ENCODE measurements at regions of chr12 and their contacts with region 1.

Region 1: DNA sequence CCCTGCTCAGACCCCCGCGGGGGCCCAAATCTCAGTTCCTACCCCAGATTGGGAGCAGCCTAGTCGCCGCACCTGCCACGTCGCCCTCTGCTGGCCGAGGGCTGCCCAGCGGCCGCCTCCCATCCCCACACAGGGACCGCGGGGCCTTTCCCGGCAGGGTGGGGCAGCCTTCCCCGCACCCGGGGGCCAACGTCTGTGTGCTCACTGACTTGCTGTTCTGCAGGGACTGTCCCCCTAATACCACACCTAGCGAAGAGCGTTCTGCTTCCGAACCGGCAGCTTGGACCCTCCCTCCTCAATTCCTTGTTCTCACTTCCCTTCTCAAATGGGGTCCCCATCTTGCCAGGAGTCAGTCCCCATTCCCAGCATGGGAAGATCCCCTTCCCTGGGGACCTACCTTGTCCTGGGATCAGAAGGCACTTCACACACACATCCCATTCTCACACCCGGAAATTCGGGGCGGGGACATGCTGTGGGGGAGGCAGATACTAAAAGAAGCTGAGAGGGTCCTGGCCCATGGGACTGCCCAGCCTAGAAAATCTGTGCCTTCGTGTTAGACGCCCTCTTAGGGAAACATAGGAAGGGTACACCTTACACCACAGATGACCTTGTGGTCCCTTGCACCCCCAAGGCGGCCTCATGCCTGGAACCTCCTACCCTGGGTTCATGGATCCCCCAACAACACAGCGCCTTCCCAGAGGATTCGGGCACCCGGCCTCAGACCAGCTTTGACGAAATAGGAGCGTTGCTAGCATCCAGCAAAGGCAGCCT is 16.4 kb downstream of the ACVRL1 start:
- DNase-seq: peak; percentile 85
- ATAC-seq: peak; percentile 73
- H3K4me3 ChIP-seq: no peak overlapping the region
- H3K27ac ChIP-seq: peak overlapping the region; percentile 68
- H3K4me1 ChIP-seq: peaks cover 39% of the 10 kb centered on the region
- H3K27me3 ChIP-seq: no peaks in the 10 kb centered on the region
- CTCF ChIP-seq: peak; percentile 86

Region 2: DNA sequence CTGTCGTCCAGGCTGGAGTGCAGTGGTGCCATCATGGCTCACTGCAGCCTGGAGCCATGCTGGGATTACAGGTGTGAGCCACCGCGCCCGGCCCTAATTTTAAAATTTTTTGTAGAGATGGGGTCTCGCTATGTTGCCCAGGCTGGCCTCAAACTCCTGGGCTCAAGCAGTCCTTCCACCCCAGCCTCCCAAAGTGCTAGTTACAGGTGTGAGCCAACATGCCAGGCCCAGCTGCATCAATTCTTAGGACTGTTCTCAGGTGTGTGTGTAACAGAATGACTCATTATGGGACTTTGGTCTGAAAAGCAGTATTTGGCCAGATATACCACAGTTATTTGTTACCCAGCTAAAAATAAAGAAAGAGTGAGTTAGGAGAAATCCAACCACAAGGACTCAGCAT is 858.2 kb before region 1 on chr12:
- intact Hi-C with region 1: no loop called
- DNase-seq: no peak
- ATAC-seq: no peak
- H3K4me3 ChIP-seq: no peak overlapping the region
- H3K27ac ChIP-seq: no peak overlapping the region
- H3K4me1 ChIP-seq: no peaks in the 10 kb centered on the region
- H3K27me3 ChIP-seq: no peaks in the 10 kb centered on the region
- CTCF ChIP-seq: no peak

Region 3: DNA sequence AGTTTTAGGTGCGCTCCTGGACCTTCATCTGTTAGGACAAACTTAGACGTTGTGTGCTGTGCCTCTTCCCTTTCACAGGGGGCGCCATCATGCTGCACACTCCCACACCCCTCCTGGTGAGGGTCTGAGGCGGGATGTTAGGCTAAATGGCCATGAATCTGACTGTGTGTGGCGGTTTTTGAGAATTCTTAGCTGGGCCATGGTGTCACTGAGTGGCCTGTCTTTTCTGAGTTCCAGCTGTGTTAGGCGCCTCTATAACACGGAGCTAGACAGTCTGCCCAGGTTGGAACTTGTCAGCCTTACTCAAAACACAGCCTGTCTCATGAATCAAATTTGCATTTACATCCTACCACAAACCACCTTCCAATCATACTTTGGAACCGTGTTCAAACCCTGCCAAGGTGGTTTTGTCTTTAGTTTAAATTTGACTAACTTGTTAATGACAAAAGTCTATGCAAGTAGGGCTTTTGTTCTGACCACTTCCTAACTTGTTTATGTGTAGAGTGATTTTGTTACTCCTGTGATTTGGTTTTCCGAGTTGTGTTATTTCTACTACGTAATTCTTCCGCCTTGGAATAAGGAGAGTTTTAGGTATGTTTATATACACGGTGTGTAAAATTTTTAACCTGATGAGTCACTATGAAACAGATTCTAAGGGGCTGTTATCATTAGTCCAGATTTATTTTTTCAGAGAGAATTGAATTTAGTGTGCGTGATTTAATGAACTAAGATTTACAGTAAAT is 47.4 kb after region 1 on chr12:
- intact Hi-C with region 1: loop called (anchors 10 kb)
- DNase-seq: no peak
- ATAC-seq: peak; percentile 17
- H3K4me3 ChIP-seq: no peak overlapping the region
- H3K27ac ChIP-seq: peak overlapping the region; percentile 31
- H3K4me1 ChIP-seq: peaks cover 52% of the 10 kb centered on the region
- H3K27me3 ChIP-seq: no peaks in the 10 kb centered on the region
- CTCF ChIP-seq: peak; percentile 49

Region 4: DNA sequence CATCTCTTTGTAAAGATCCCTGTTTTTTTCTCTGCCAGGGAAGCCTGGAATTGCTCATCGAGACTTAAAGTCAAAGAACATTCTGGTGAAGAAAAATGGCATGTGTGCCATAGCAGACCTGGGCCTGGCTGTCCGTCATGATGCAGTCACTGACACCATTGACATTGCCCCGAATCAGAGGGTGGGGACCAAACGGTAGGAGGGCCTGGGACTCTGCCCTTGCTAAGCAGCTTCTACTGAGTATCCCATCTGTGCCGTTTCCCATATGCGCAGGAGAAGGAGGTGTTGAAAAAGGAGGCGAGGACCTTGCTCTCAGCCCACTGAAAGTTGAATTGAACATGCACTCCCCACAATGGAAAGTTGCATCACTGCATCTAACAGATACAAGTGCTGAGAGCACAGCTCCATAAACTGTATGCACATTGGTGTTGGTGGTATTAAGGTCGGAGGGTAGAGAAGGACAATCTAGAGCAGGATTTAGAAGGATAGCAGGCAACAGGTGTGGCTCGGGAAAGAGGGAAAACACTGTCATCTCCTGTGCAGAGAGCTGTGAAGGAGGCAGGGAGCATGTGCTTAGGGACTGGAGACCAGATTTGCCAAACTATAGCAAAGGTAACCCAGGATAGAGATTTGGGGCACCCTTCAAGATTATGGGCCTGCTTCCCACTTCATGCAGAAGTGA is 61.6 kb after region 1 on chr12:
- intact Hi-C with region 1: no loop called
- DNase-seq: no peak
- ATAC-seq: no peak
- H3K4me3 ChIP-seq: no peak overlapping the region
- H3K27ac ChIP-seq: no peak overlapping the region
- H3K4me1 ChIP-seq: no peaks in the 10 kb centered on the region
- H3K27me3 ChIP-seq: no peaks in the 10 kb centered on the region
- CTCF ChIP-seq: no peak

Region 5: GRCh38 chr12:52230327-52231291 is 306.9 kb after region 1 on chr12:
- intact Hi-C with region 1: no loop called
- DNase-seq: peak; percentile 84
- ATAC-seq: peak; percentile 69
- H3K4me3 ChIP-seq: no peak overlapping the region
- H3K27ac ChIP-seq: peak overlapping the region; percentile 80
- H3K4me1 ChIP-seq: peaks cover 8% of the 10 kb centered on the region
- H3K27me3 ChIP-seq: peaks cover 10% of the 10 kb centered on the region
- CTCF ChIP-seq: no peak

Measured in upper lobe of right lung (tissue), 1 donor.